ENCODE measurements at regions of chr22 and their contacts with region 1.

Region 1: GRCh38 chr22:42621505-42622002 is 6.9 kb upstream of the POLDIP3 start:
- DNase-seq: peak; percentile 71
- H3K4me3 Mint-ChIP-seq: no peak overlapping the region
- H3K27ac Mint-ChIP-seq: no peak overlapping the region
- H3K4me1 Mint-ChIP-seq: peaks cover 14% of the 10 kb centered on the region
- H3K27me3 Mint-ChIP-seq: no peaks in the 10 kb centered on the region

Region 2: DNA sequence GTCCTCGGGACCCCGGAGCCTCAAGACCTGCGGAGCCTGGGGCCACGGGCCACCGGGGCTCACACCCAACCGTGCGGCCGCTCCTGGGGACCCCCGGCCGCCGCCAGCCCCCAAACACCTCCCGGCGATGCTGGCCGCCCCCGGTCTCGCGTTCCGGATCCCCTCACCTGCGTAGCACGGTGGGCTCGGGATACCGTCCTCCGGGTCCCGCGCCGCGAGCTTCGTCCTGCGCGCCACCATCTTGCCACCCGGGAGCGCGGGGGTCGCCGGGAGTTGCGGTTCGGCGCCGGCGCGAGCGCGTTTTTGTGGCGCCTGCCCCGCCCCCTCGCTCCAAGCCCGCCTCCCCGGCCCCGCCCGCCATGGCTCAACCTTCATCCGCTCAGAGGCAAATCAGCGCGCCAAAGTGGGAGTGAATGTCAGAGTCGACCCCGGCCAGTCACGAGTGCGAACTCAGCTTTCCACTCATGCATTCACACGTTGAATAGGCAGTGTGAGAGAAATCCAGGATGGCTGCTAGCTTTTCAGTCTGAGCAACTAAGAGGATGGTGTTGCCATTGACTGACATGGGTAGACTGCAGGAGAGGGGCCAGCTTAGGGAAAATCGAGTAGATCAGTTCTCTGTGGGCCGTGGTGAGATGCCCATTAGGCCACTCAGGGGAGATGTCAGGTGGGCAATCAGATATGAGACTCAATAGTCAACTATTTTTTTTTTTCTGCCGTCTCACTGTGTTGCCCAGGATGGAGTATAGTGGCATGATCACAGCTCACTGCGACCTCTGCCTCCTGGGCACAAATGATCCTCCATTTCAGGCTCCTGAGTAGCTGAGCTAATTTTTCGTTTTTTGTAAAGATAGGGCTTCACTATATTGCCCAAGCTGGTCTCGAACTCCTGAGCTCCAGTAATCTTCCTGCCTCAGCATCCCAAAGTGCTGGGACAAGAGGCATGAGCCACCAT is 39.5 kb before region 1 on chr22:
- CTCF ChIA-PET with region 1: no interaction called
- DNase-seq: peak; percentile 90
- H3K4me3 Mint-ChIP-seq: peak overlapping the region; percentile 98
- H3K27ac Mint-ChIP-seq: peak overlapping the region; percentile 83
- H3K4me1 Mint-ChIP-seq: peaks cover 19% of the 10 kb centered on the region
- H3K27me3 Mint-ChIP-seq: no peaks in the 10 kb centered on the region

Region 3: DNA sequence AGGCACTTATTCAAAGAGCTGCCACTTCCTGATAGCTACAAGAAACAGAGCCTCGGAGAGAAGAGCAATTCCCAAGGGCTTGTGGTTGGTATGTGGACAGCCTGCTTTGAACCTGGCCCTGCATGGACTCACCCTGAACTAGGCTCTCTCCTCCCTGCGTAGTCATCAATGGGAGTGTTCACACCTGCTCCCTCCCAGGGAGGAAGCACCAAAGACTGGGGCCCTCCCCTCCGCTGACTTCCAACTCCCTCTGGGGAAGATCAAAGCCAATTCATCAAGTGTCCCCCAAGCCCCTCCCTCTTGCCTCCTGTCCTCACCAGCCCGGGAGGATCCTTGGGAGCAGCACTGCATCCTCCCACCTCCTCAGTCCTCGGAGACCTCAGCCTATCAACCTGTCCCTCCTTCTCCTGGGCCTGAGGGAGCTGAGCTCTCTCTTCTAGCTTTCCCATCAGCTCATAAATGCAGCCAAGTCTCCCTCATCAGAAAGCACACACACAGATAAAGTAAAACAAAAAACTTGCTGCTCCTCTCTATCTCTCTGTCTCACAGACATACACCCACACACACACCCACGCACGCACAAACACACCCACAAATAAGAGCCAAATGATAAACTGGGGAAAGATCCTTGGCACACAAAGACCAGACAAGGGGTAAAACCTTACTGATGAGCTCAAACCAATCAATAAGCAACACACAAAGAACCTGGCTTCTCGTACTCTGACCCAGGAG is 95.8 kb after region 1 on chr22:
- CTCF ChIA-PET with region 1: no interaction called
- DNase-seq: no peak
- H3K4me3 Mint-ChIP-seq: no peak overlapping the region
- H3K27ac Mint-ChIP-seq: no peak overlapping the region
- H3K4me1 Mint-ChIP-seq: peaks cover 17% of the 10 kb centered on the region
- H3K27me3 Mint-ChIP-seq: peaks cover 80% of the 10 kb centered on the region

Region 4: GRCh38 chr22:42820066-42820763 is 198.7 kb after region 1 on chr22:
- CTCF ChIA-PET with region 1: interaction called, 10 read pairs
- DNase-seq: no peak
- H3K4me3 Mint-ChIP-seq: no peak overlapping the region
- H3K27ac Mint-ChIP-seq: no peak overlapping the region
- H3K4me1 Mint-ChIP-seq: no peaks in the 10 kb centered on the region
- H3K27me3 Mint-ChIP-seq: no peaks in the 10 kb centered on the region